ENCODE measurements at regions of chr13 and their contacts with region 1.

Region 1: GRCh38 chr13:49996951-49997895 is at the start of gene TRIM13:
- DNase-seq: peak; percentile 64 to 85 (median 82)
- ATAC-seq: peak; percentile 88
- H3K4me3 ChIP-seq: peak within 1 kb of the TSS; percentile 97
- H3K4me3 Mint-ChIP-seq: peak within 1 kb of the TSS; percentile 83 to 95 (median 86)
- H3K27ac ChIP-seq: peak within 1 kb of the TSS; percentile 89
- H3K27ac Mint-ChIP-seq: peak within 1 kb of the TSS; percentile 84 to 92 (median 87)
- H3K4me1 ChIP-seq: peaks cover 25 to 31% of the 10 kb centered on the region in 2 donors
- H3K4me1 Mint-ChIP-seq: peaks cover 16 to 57% (median 49%) of the 10 kb centered on the region in 7 donors
- H3K27me3 ChIP-seq: no peaks in the 10 kb centered on the region
- H3K27me3 Mint-ChIP-seq: no peaks in the 10 kb centered on the region
- total RNA-seq, gene TRIM13: 18.3 to 27.1 (median 21.8) TPM

Region 2: DNA sequence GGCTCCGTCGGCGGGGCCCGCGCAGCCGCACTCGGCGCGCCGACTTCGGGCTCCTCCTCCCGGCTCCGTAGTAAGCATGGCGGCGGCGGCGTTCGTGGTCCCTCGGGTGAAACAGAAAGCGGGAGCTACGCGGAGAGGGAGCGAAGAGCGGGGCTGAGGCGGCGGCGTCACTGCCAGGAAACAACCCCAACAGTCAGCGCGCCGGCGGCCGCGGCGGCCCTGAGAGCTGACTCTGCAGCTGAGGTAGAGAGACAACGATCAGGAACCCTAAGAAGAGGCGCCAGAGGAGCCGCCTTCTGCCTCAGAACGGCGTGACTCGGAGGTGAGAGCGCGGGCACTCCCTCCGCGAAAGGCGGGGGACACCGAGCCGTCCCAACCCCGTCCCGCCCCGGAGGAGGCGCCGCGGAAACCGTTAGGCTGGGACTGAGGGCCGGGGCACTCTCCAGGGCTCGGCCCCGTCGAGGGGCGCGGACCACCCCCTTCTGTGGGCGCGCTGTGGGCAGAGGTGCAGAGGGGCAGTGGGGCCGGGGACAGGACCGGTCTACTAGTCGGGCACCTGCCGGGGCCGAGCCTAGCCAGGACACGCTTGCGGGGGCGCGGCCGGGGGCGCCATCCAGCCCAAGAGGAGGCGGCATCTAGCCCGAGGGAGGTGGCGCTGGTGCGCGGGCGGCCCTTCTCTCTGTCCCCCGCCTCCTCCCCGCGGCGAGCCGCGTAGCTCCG is 1021.2 kb before region 1 on chr13 and contains the start of gene FNDC3A:
- CTCF ChIA-PET with region 1: no interaction called
- POLR2A ChIA-PET with region 1: no interaction called
- intact Hi-C with region 1: loop called in 1 of 2 experiments (anchors 10 kb)
- DNase-seq: peak; percentile 84 to 90 (median 86)
- ATAC-seq: peak; percentile 87
- H3K4me3 ChIP-seq: peak within 1 kb of the TSS; percentile 82
- H3K4me3 Mint-ChIP-seq: peak within 1 kb of the TSS; percentile 92 to 100 (median 98)
- H3K27ac ChIP-seq: peak within 1 kb of the TSS; percentile 95
- H3K27ac Mint-ChIP-seq: peak within 1 kb of the TSS; percentile 93 to 99 (median 99)
- H3K4me1 ChIP-seq: peaks cover 13 to 28% of the 10 kb centered on the region in 2 donors
- H3K4me1 Mint-ChIP-seq: peaks cover 35 to 69% (median 49%) of the 10 kb centered on the region in 7 donors
- H3K27me3 ChIP-seq: no peaks in the 10 kb centered on the region
- H3K27me3 Mint-ChIP-seq: peaks cover 0 to 6% (median 0%) of the 10 kb centered on the region in 5 donors
- total RNA-seq, gene FNDC3A: 34.2 to 46.4 (median 39.1) TPM

Region 3: DNA sequence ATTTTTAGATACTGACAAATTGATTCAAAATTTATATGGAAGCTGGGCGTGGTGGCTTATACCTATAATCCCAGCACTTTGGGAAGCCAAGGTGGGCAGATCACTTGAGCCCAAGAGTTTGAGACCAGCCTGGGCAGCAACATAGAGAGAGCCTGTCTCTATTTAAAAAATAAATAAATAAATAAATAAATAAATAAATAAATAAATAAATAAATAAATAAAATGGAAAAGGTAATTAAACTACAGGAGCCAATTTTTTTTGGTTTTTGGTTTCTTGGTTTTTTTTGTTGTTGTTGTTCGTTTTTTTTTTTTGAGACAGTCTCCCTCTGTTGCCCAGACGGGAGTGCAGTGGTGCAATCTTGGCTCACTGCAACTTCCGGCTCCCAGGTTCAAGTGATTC is 29.8 kb before region 1 on chr13:
- CTCF ChIA-PET with region 1: no interaction called
- POLR2A ChIA-PET with region 1: no interaction called
- intact Hi-C with region 1: no loop called
- DNase-seq: no peak
- ATAC-seq: no peak
- H3K4me3 ChIP-seq: no peak overlapping the region
- H3K4me3 Mint-ChIP-seq: no peak overlapping the region
- H3K27ac ChIP-seq: no peak overlapping the region
- H3K27ac Mint-ChIP-seq: no peak overlapping the region
- H3K4me1 ChIP-seq: no peaks in the 10 kb centered on the region
- H3K4me1 Mint-ChIP-seq: no peaks in the 10 kb centered on the region
- H3K27me3 ChIP-seq: no peaks in the 10 kb centered on the region
- H3K27me3 Mint-ChIP-seq: no peaks in the 10 kb centered on the region

Region 4: GRCh38 chr13:50015258-50015657 is 18.0 kb after region 1 on chr13 and contains the start of gene KCNRG:
- CTCF ChIA-PET with region 1: interaction called, 8 read pairs
- POLR2A ChIA-PET with region 1: interaction called, 13 read pairs
- intact Hi-C with region 1: no loop called
- DNase-seq: no peak
- ATAC-seq: no peak
- H3K4me3 ChIP-seq: no peak within 1 kb of the TSS
- H3K4me3 Mint-ChIP-seq: peak within 1 kb of the TSS in 1 of 10 donors; percentile 3
- H3K27ac ChIP-seq: no peak within 1 kb of the TSS
- H3K27ac Mint-ChIP-seq: peak within 1 kb of the TSS in 6 of 9 donors; percentile 2 to 72 (median 29)
- H3K4me1 ChIP-seq: no peaks in the 10 kb centered on the region
- H3K4me1 Mint-ChIP-seq: peaks cover 12 to 70% (median 60%) of the 10 kb centered on the region in 7 donors
- H3K27me3 ChIP-seq: no peaks in the 10 kb centered on the region
- H3K27me3 Mint-ChIP-seq: no peaks in the 10 kb centered on the region
- total RNA-seq, gene KCNRG: 0.29 to 0.97 (median 0.50) TPM

Region 5: GRCh38 chr13:50236898-50237318 is 239.7 kb after region 1 on chr13:
- CTCF ChIA-PET with region 1: no interaction called
- POLR2A ChIA-PET with region 1: no interaction called
- intact Hi-C with region 1: loop called in 1 of 2 experiments (anchors 5 kb)
- DNase-seq: peak in 4 of 9 donors; percentile 5 to 38 (median 14)
- ATAC-seq: peak; percentile 88
- H3K4me3 ChIP-seq: peak overlapping the region; percentile 43
- H3K4me3 Mint-ChIP-seq: peak overlapping the region; percentile 38 to 78 (median 65)
- H3K27ac ChIP-seq: no peak overlapping the region
- H3K27ac Mint-ChIP-seq: peak overlapping the region; percentile 3 to 66 (median 15)
- H3K4me1 ChIP-seq: peaks cover 5 to 8% of the 10 kb centered on the region in 2 donors
- H3K4me1 Mint-ChIP-seq: peaks cover 6 to 40% (median 19%) of the 10 kb centered on the region in 7 donors
- H3K27me3 ChIP-seq: no peaks in the 10 kb centered on the region
- H3K27me3 Mint-ChIP-seq: peaks cover 0 to 68% (median 0%) of the 10 kb centered on the region in 5 donors

Region 6: GRCh38 chr13:50531917-50532899 is 535.0 kb after region 1 on chr13:
- CTCF ChIA-PET with region 1: interaction called, 3 read pairs
- POLR2A ChIA-PET with region 1: no interaction called
- intact Hi-C with region 1: loop called (anchors 5 kb)
- DNase-seq: no peak
- ATAC-seq: no peak
- H3K4me3 ChIP-seq: no peak overlapping the region
- H3K4me3 Mint-ChIP-seq: no peak overlapping the region
- H3K27ac ChIP-seq: no peak overlapping the region
- H3K27ac Mint-ChIP-seq: no peak overlapping the region
- H3K4me1 ChIP-seq: no peaks in the 10 kb centered on the region
- H3K4me1 Mint-ChIP-seq: peaks cover 9 to 28% (median 13%) of the 10 kb centered on the region in 7 donors
- H3K27me3 ChIP-seq: no peaks in the 10 kb centered on the region
- H3K27me3 Mint-ChIP-seq: peaks cover 0 to 17% (median 11%) of the 10 kb centered on the region in 5 donors

Region 7: GRCh38 chr13:51803422-51804294 is 1806.4 kb after region 1 on chr13 and contains the start of gene DHRS12:
- CTCF ChIA-PET with region 1: no interaction called
- POLR2A ChIA-PET with region 1: no interaction called
- intact Hi-C with region 1: loop called (anchors 2 to 5 kb)
- DNase-seq: peak; percentile 83 to 93 (median 92)
- ATAC-seq: peak; percentile 83
- H3K4me3 ChIP-seq: peak within 1 kb of the TSS; percentile 81
- H3K4me3 Mint-ChIP-seq: peak within 1 kb of the TSS; percentile 84 to 99 (median 96)
- H3K27ac ChIP-seq: peak within 1 kb of the TSS; percentile 100
- H3K27ac Mint-ChIP-seq: peak within 1 kb of the TSS; percentile 99 to 100 (median 100)
- H3K4me1 ChIP-seq: peaks cover 29 to 32% of the 10 kb centered on the region in 2 donors
- H3K4me1 Mint-ChIP-seq: peaks cover 28 to 70% (median 52%) of the 10 kb centered on the region in 7 donors
- H3K27me3 ChIP-seq: no peaks in the 10 kb centered on the region
- H3K27me3 Mint-ChIP-seq: peaks cover 0 to 6% (median 0%) of the 10 kb centered on the region in 5 donors
- total RNA-seq, gene DHRS12: 6.7 to 25.3 (median 20.1) TPM

Measured in naive thymus-derived CD4-positive, alpha-beta T cell (primary cell).